GM12878 (cell line): ENCODE measurements at regions of chr4 and their contacts with region 1.

Region 1: GRCh38 chr4:6180841-6181631 is 19.3 kb downstream of the JAKMIP1 start:
- DNase-seq: peak; percentile 98
- ATAC-seq: peak; percentile 88
- H3K4me3 ChIP-seq: no peak overlapping the region
- H3K27ac ChIP-seq: peak overlapping the region; percentile 94
- H3K4me1 ChIP-seq: peaks cover 67% of the 10 kb centered on the region
- H3K27me3 ChIP-seq: no peaks in the 10 kb centered on the region
- CTCF ChIP-seq: no peak
- EP300 ChIP-seq: peak; percentile 100
- POLR2A ChIP-seq: peak; percentile 81
- RAD21 ChIP-seq: peak; percentile 18; the same call in 1 of the 2 replicates

Region 2: DNA sequence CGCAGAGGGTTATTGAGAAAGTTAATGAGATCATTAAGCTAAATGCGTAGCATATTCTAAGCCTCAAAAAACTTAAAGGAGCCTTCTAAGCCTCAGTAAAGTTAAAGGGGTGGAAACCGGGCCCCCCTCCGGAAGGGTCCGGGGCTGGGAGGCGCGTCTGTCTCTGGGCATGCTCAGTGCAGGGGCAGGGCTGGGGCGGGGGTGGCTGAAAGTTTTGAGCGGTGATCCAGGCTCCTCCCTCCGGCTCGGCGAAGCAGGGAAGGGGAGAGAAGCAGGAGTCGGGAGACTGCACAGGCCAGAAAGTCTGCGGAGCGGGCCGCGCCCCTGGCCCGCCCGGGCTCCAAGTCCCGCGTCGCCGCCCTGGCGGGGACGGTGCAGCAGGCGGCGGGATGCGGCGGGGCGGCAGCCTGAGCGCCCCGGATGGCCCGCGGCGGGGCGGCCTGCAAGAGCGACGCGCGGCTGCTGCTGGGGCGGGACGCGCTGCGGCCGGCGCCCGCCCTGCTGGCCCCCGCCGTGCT is 470.0 kb before region 1 on chr4 and contains the start of gene EVC:
- CTCF ChIA-PET with region 1: no interaction called
- POLR2A ChIA-PET with region 1: interaction called, 3 read pairs
- RAD21 ChIA-PET with region 1: no interaction called
- SMC1A ChIA-PET with region 1: no interaction called
- in situ Hi-C with region 1: no loop called
- intact Hi-C with region 1: loop called (anchors 10 kb)
- DNase-seq: no peak
- ATAC-seq: peak; percentile 58
- H3K4me3 ChIP-seq: peak within 1 kb of the TSS; percentile 72
- H3K27ac ChIP-seq: peak within 1 kb of the TSS; percentile 78
- H3K4me1 ChIP-seq: peaks cover 3% of the 10 kb centered on the region; the same call in 1 of the 2 replicates
- H3K27me3 ChIP-seq: no peaks in the 10 kb centered on the region
- CTCF ChIP-seq: 0 out of 6 replicates have a peak, but pooled peaks of 1 of the 3 experiments have one; percentile 1
- EP300 ChIP-seq: no peak
- POLR2A ChIP-seq: no peak
- RAD21 ChIP-seq: no peak
- polyA plus RNA-seq, gene EVC: 0.87 to 1.2 TPM

Region 3: DNA sequence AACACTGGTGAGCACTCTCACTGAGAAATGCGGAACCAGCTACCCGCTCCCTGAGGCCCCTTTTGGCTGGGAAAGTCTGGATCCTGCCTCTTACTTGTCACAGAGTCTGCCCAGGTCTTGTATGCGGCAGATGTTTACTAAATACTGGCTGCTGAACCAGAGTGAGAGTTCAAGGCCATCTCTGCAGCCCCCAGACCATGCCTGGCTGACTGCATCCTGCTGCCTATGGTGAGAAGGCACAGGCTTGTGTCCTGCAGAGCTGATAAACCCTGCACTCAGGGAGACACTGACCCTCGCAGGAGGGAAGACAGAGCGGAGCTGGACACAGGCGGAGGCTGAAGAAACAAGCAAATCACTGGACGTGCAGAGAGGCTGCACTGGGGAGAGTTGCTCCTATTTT is 27.2 kb before region 1 on chr4:
- CTCF ChIA-PET with region 1: interaction called, 6 read pairs
- POLR2A ChIA-PET with region 1: interaction called, 19 read pairs
- RAD21 ChIA-PET with region 1: interaction called, 9 read pairs
- SMC1A ChIA-PET with region 1: interaction called, 8 read pairs
- in situ Hi-C with region 1: no loop called
- intact Hi-C with region 1: no loop called
- DNase-seq: no peak
- ATAC-seq: peak; percentile 76
- H3K4me3 ChIP-seq: no peak overlapping the region
- H3K27ac ChIP-seq: peak overlapping the region; percentile 42; the same call in 1 of the 2 replicates
- H3K4me1 ChIP-seq: peaks cover 21% of the 10 kb centered on the region
- H3K27me3 ChIP-seq: no peaks in the 10 kb centered on the region
- CTCF ChIP-seq: no peak
- EP300 ChIP-seq: no peak
- POLR2A ChIP-seq: no peak
- RAD21 ChIP-seq: no peak

Region 4: GRCh38 chr4:6200011-6200921 is 19.2 kb after region 1 on chr4 and contains the start of gene JAKMIP1:
- CTCF ChIA-PET with region 1: interaction called, 30 read pairs
- POLR2A ChIA-PET with region 1: interaction called, 84 read pairs
- RAD21 ChIA-PET with region 1: interaction called, 120 read pairs
- SMC1A ChIA-PET with region 1: interaction called, 161 read pairs
- in situ Hi-C with region 1: no loop called
- intact Hi-C with region 1: loop called (anchors 1 kb)
- DNase-seq: no peak
- ATAC-seq: peak; percentile 62
- H3K4me3 ChIP-seq: peak within 1 kb of the TSS; percentile 98
- H3K27ac ChIP-seq: peak within 1 kb of the TSS; percentile 85
- H3K4me1 ChIP-seq: peaks cover 30% of the 10 kb centered on the region
- H3K27me3 ChIP-seq: no peaks in the 10 kb centered on the region
- CTCF ChIP-seq: no peak
- EP300 ChIP-seq: no peak
- POLR2A ChIP-seq: peak; percentile 69
- RAD21 ChIP-seq: no peak
- polyA plus RNA-seq, gene JAKMIP1: 0.52 to 1.6 TPM

Region 5: DNA sequence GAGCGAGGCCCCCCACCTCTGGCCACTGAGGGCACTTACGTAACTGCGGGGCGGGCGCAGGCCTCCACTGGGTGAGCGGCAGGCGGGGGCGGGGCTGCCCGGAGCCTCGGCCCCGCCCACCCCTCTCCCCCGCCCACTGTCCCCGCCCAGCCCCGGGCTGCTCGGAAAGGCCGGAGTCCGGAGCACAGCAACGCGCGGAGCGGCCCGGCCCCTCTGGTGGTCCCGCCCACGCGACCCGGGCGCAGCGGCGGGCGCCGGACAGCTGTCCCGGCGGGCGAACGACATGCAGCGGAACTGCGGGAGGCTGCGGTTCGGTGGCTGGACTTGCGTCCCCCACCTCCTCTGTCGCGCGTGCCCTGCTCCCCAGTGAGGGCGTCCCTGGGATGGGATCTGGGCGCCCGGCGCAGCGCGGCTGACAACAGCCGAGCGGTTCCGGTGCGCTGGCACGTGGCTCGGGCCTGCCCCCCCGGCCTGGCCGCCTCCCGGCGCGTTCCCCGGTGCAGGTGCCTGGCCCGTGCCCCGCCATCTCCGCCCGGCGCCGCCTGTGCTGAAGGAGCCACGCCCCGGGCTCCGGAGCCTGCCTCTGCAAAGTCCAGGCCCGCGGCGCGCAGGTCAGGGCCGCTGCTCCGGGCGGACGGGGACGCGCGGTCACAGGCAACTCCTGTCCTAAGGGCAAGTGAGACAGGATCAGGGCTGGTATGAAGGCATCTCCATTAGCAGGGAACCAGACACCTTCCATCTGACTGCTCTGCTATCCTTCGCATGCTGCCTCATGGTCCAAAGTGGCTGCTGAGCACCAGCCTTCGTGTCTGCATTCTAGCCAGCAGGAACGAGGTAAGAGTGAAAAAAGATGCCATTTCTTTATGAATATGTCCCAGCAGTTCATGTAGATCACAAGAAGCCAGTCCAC is 41.1 kb after region 1 on chr4:
- CTCF ChIA-PET with region 1: interaction called, 5 read pairs
- POLR2A ChIA-PET with region 1: interaction called, 3 read pairs
- RAD21 ChIA-PET with region 1: interaction called, 5 read pairs
- SMC1A ChIA-PET with region 1: interaction called, 8 read pairs
- in situ Hi-C with region 1: no loop called
- intact Hi-C with region 1: loop called (anchors 2 kb)
- DNase-seq: no peak
- ATAC-seq: peak; percentile 57
- H3K4me3 ChIP-seq: 0 out of 2 replicates have a peak overlapping the region, but pooled peaks have one; percentile 27
- H3K27ac ChIP-seq: no peak overlapping the region
- H3K4me1 ChIP-seq: peaks cover 16% of the 10 kb centered on the region
- H3K27me3 ChIP-seq: no peaks in the 10 kb centered on the region; a peak in 2 of 4 replicates
- CTCF ChIP-seq: no peak
- EP300 ChIP-seq: no peak
- POLR2A ChIP-seq: no peak
- RAD21 ChIP-seq: no peak

Region 6: DNA sequence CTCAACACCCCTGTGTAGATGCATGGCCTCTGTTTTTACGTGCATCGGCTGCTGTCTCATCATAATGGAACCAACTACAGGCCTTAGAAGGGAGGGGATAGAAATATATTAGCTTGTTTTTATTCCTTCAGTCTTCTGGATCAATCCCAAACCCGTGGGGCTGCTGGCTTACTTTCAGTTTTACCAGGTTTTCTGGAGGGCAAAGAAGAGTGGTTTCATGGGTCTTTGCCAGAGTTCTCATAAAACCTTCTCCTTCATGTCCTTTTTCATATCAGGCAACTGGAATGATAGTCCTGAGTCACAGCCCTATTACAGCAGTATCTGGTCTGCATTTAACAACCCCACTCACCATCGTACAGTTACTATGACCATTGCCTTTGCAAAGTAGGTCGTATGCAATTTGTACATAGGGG is 256.8 kb after region 1 on chr4:
- CTCF ChIA-PET with region 1: no interaction called
- POLR2A ChIA-PET with region 1: no interaction called
- RAD21 ChIA-PET with region 1: no interaction called
- SMC1A ChIA-PET with region 1: no interaction called
- in situ Hi-C with region 1: no loop called
- intact Hi-C with region 1: no loop called
- DNase-seq: no peak
- ATAC-seq: no peak
- H3K4me3 ChIP-seq: no peak overlapping the region
- H3K27ac ChIP-seq: no peak overlapping the region
- H3K4me1 ChIP-seq: no peaks in the 10 kb centered on the region
- H3K27me3 ChIP-seq: no peaks in the 10 kb centered on the region
- CTCF ChIP-seq: no peak
- EP300 ChIP-seq: no peak
- POLR2A ChIP-seq: no peak
- RAD21 ChIP-seq: no peak